ENCODE measurements at regions of chr5 and their contacts with region 1.

Region 1: GRCh38 chr5:149035372-149035790 is 27.5 kb downstream of the SH3TC2 start:
- DNase-seq: peak; percentile 75
- H3K27ac ChIP-seq: no peak overlapping the region
- CTCF ChIP-seq: peak; percentile 98

Region 2: GRCh38 chr5:148740966-148741742 is 294.2 kb before region 1 on chr5:
- CTCF ChIA-PET with region 1: interaction called, 100 read pairs
- POLR2A ChIA-PET with region 1: no interaction called
- DNase-seq: peak; percentile 77
- H3K27ac ChIP-seq: no peak overlapping the region
- CTCF ChIP-seq: peak; percentile 85

Region 3: GRCh38 chr5:149007174-149007573 is 28.2 kb before region 1 on chr5:
- CTCF ChIA-PET with region 1: interaction called, 12 read pairs
- POLR2A ChIA-PET with region 1: no interaction called
- DNase-seq: no peak
- H3K27ac ChIP-seq: 0 out of 2 replicates have a peak overlapping the region, but pooled peaks have one; percentile 33
- CTCF ChIP-seq: no peak

Region 4: DNA sequence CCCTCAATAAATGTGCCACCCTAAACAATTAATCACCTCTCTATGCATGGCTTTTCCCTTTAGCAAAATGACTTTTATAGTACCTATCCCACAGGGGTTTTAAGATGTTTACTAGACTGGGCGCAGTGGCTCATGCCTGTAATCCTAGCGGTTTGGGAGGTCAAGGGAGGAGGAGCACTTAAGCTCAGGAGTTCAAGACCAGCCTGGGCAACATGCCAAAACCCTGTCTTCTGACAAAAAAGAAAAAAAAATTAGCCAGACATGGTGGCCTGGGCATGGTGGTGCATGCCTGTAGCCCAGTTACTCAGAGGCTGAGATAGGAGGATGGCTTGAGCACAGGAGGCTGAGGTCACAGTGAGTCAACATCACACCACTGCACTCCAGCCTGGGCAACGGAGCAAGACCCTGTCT is 14.0 kb after region 1 on chr5:
- CTCF ChIA-PET with region 1: interaction called, 10 read pairs
- POLR2A ChIA-PET with region 1: no interaction called
- DNase-seq: no peak
- H3K27ac ChIP-seq: peak overlapping the region; percentile 31
- CTCF ChIP-seq: no peak

Region 5: DNA sequence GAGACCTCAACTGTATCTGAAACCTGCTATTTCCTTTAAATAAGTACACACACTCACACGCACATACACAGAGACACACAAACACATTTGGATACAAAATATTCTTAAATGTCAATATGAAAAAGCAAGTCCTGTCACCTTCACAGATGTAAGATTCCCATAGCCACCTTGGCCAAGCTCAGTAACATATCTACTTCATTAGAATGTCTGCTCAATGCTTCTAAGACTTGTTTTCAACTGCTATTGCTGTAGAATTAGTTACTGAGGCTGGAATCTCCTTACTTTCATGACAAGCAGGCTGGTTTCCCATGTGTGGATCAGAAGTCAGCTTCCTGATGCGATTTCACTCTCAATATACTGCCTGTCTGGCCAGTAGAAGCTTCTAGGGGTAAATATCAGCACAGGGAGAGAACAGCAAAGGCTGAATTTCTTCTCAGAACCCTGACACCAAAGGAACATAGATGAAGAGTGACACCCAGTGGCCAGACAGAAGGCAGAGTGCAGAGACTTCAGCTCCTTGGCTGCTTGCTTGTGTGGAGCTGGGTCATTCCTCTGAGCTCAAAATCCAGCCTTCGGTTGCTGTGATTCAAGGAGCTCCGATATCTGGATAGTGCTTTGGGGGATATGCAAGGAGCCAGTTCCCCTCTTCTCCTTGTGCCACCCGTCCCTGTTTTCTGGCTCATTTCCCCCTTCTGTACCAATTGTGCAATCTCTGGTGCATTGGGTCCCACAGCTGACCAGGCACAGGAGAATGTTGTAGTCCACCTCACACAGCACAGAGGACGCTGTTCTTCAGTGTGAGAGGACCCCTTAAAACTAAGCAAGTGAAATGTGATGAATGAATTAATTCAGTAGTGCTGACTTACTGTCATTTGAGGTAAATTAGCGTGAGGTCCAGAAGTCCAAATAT is 79.3 kb after region 1 on chr5:
- CTCF ChIA-PET with region 1: interaction called, 44 read pairs
- POLR2A ChIA-PET with region 1: no interaction called
- DNase-seq: peak; percentile 75
- H3K27ac ChIP-seq: no peak overlapping the region; the same call in 1 of the 2 replicates
- CTCF ChIP-seq: peak; percentile 90

Measured in RWPE1 (cell line).